GM18951 (cell line): ENCODE measurements at regions of chr4 and their contacts with region 1.

Region 1: DNA sequence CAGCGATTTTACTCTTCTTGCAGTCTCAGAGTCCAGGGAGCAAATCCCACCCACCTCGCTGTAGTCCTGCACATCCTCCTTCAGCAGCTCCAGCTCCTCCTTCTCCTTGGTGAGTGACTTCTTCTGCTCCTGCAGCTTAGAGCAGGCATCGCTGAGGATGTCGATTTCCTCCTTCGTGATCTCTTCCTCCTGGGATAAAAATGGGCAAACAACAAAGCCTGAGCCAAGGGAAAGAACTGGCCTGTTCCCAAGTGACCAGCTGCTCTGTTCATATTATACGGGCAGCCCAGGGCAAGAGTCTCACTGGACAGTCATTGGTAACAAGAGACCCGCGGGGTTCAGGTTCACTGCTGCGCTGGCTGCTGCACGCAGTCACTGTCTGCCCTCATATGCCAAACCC is 26.2 kb downstream of the FGFR3 start:
- POLR2A ChIP-seq: no peak

Region 2: GRCh38 chr4:1740021-1740545 is 79.2 kb before region 1 on chr4:
- in situ Hi-C with region 1: loop called (anchors 5 kb)
- POLR2A ChIP-seq: no peak